Left colon (tissue), 2 donors: ENCODE measurements at regions of chr1 and their contacts with region 1.

Region 1: DNA sequence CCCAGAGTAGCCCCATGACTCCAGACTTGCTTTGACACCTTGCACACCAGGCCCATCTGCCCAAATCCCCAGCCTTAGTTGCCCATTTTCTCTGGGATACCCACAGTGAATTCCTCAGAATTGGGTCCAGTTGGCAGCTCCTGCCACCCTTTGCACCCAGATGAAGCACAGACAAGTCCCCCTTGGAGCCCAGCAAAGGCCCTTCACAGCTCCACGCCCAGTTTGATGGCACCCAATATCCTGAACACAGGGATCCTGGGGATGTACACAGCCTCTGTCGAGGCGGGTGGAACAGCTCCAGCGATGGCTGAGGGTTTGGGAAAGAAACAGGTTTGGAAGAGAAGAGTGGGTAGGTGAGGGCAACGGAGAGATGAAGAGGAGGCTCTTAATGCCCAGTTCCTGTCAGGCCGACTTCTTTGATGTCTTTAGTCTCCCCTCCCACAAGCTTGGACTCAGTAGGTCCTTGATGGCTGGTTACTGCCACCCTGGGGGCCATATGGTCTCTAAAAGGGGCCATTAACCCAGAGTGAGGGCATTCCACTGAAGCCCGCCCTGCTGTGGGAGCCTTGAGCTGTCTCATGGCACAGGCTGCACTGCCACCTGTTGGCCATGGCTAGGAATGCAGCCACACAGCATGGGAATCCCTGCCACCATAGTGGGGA is 21.7 kb downstream of the TMEM53 start:
- DNase-seq: peak; percentile 58 to 81
- ATAC-seq: peak; percentile 78

Region 2: GRCh38 chr1:44405041-44405797 is 247.4 kb before region 1 on chr1 and contains the start of gene RNF220:
- intact Hi-C with region 1: loop called in 1 of 2 experiments (anchors 10 kb)
- DNase-seq: peak in 1 of 2 donors; percentile 45
- ATAC-seq: peak; percentile 89
- total RNA-seq, gene RNF220: 63.9 to 64.3 TPM

Region 3: GRCh38 chr1:44609412-44609767 is 43.2 kb before region 1 on chr1:
- intact Hi-C with region 1: loop called in 1 of 2 experiments (anchors 2 kb)
- DNase-seq: peak; percentile 36 to 58
- ATAC-seq: peak; percentile 42

Region 4: DNA sequence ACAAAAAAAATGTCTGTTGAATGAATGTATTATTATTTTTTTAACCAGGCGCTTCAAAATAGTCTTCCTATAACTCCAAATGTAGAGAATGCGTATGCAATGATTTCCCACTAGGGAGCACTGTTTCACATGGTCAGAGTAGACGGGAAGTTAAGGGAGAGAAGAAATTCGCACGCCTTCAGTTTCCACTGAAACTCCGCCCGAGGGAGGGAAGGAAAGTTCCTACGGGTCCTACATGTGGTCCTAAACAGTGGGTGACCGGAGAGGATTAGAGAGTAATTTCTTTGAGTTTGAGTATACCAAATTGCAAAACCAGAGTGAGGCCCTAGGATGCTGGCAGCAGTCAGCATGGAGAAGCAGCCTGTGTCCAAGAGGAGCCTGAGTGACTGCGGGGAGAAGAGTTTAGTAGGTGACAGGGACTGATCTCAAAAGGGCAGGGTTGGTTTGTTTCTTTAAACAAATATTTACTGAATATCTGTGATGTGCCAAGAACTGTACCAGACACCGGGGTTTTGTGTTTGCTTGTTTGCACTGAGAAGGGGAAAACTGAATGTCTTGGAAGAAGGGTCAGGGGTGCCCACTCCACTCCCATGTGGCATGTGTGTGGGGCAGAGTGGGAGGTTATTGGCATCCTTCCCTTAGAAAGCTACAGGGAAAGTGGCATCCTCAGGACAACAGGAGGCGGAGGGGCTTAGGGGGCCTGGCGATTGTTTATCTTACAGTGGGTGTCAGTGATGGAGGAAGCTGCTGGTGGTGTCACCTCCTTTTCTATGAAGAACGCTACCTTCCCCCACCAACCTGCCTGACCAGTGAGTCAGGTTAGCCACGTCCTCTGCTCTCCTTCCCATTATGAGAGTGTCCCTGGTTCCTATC is 55.6 kb after region 1 on chr1:
- intact Hi-C with region 1: no loop called
- DNase-seq: peak in 1 of 2 donors; percentile 26
- ATAC-seq: peak; percentile 90